Tibial artery (tissue), 4 donors: ENCODE measurements at regions of chr6 and their contacts with region 1.

Region 1: DNA sequence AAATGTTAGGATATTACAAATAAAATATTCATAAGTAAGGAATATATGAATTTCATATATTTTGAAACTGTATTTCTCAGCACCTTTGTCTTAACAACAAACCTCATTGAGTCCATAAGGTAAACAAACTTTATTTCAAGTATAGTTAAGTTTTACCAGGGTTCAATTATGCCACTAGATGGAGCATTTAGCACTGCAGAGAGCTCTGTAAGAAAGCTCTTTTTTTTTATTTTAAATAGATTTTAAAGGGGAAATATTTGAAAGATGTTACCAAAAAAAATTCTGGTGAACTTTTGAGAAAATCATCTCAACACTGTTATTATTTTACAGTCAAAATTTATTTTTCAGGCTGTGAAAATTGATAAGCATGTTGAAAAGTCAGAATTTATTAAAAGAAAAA is 955.2 kb upstream of the EYS start:
- DNase-seq: no peak
- H3K4me3 ChIP-seq: no peak overlapping the region
- H3K27ac ChIP-seq: no peak overlapping the region
- H3K4me1 ChIP-seq: no peaks in the 10 kb centered on the region
- H3K27me3 ChIP-seq: no peaks in the 10 kb centered on the region
- CTCF ChIP-seq: peak in 1 of 2 experiments; percentile 22

Region 2: DNA sequence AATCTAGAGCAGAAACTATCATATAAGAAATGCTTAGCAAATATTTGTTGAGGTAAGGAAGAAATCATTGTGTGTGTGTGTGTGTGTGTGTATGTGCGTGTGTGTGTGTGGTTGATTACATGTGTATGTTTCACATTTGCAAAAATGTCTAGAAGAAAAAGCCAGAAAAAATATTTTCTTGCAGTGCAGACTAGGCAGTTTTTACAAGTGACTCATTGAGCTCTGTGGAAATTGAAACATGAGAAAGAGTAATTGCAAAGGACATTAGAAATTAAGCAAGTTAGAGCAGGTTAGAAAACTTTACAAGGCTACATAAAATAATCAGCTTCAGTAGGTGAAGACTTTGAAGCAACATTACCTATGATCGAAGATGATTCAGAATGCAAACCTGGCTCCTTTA is 286.2 kb before region 1 on chr6:
- intact Hi-C with region 1: loop called (anchors 10 kb)
- DNase-seq: no peak
- H3K4me3 ChIP-seq: no peak overlapping the region
- H3K27ac ChIP-seq: no peak overlapping the region
- H3K4me1 ChIP-seq: no peaks in the 10 kb centered on the region
- H3K27me3 ChIP-seq: no peaks in the 10 kb centered on the region
- CTCF ChIP-seq: no peak

Region 3: GRCh38 chr6:66699385-66699784 is 37.2 kb after region 1 on chr6:
- intact Hi-C with region 1: no loop called
- DNase-seq: no peak
- H3K4me3 ChIP-seq: no peak overlapping the region
- H3K27ac ChIP-seq: no peak overlapping the region
- H3K4me1 ChIP-seq: no peaks in the 10 kb centered on the region
- H3K27me3 ChIP-seq: no peaks in the 10 kb centered on the region
- CTCF ChIP-seq: no peak